PC-9 (cell line): ENCODE measurements at regions of chrX and their contacts with region 1.

Region 1: DNA sequence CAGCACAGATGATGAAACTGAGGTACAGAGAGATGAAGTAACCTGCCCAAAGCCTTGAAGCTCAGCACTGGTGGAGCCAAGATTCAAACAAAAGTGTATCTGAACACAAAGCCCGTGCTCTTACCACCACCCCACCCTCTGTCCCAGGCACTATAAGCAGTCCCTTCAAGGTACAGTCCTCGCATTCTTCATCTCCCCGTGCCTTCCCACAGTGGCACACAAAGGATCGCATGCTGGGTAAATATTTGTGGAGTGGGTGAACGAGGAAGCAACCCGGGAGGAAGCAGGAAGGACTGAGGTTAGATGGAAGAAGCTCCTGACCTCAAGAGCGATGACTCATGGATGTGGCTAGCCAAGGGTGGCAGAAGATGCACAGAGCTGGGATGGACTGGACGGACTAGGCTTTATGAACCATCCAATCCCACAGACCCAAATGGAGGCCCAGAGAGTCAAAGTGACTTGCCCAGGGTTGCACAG is 18.4 kb downstream of the IQSEC2 start:
- DNase-seq: peak; percentile 63 to 81
- H3K4me3 ChIP-seq: no peak overlapping the region
- H3K27ac ChIP-seq: peak overlapping the region; percentile 68
- H3K4me1 ChIP-seq: peaks cover 40% of the 10 kb centered on the region
- H3K27me3 ChIP-seq: no peaks in the 10 kb centered on the region
- CTCF ChIP-seq: no peak

Region 2: GRCh38 chrX:52981266-52981665 is 281.7 kb before region 1 on chrX:
- CTCF ChIA-PET with region 1: no interaction called
- POLR2A ChIA-PET with region 1: interaction called, 16 read pairs
- intact Hi-C with region 1: no loop called
- DNase-seq: no peak
- H3K4me3 ChIP-seq: no peak overlapping the region
- H3K27ac ChIP-seq: no peak overlapping the region
- H3K4me1 ChIP-seq: no peaks in the 10 kb centered on the region
- H3K27me3 ChIP-seq: no peaks in the 10 kb centered on the region
- CTCF ChIP-seq: no peak

Region 3: GRCh38 chrX:53071604-53072417 is 191.1 kb before region 1 on chrX:
- CTCF ChIA-PET with region 1: no interaction called
- POLR2A ChIA-PET with region 1: interaction called, 11 read pairs
- intact Hi-C with region 1: no loop called
- DNase-seq: peak in 1 of 2 experiments; percentile 64
- H3K4me3 ChIP-seq: peak overlapping the region; percentile 49; the same call in 1 of the 2 replicates
- H3K27ac ChIP-seq: no peak overlapping the region
- H3K4me1 ChIP-seq: no peaks in the 10 kb centered on the region
- H3K27me3 ChIP-seq: no peaks in the 10 kb centered on the region
- CTCF ChIP-seq: peak; percentile 60

Region 4: GRCh38 chrX:53211391-53211978 is 51.5 kb before region 1 on chrX:
- CTCF ChIA-PET with region 1: no interaction called
- POLR2A ChIA-PET with region 1: no interaction called
- intact Hi-C with region 1: no loop called
- DNase-seq: no peak
- H3K4me3 ChIP-seq: no peak overlapping the region
- H3K27ac ChIP-seq: no peak overlapping the region
- H3K4me1 ChIP-seq: no peaks in the 10 kb centered on the region
- H3K27me3 ChIP-seq: no peaks in the 10 kb centered on the region
- CTCF ChIP-seq: no peak

Region 5: DNA sequence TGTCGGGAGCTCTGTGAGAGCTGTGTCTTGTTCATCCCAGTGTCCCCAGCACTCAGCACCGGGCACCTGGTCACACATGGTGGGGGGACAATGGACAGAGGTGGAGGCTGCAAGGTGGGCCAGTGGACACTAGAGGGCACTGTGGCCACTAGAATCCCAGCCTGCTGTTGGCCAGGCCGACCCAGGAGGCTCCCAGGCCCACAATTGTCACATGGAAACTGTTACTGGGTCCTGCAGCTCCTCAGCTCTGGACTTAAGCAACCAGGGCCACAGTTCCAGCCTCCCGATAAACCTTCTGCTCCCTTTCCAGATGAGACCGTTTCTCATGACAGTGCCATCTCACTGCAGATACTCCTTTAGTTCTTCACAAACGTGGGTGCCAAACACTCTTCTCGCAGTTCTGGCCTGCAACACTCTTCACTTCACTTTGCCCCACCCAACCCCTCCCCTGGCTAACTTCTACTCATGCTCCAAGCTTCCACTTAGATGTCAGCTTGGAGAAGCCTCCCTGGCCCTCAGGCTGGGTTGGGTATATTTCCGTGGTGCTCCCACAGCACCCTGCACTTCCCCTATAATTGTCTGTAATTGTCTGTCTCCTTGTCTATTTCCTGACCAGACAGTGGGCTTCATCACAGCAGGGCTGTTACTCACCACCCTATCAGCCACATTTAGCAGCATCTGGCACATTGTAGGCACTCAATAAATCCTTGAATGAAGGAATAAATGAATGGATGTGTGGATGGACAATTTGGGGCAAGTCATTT is 21.9 kb after region 1 on chrX:
- CTCF ChIA-PET with region 1: interaction called, 3 read pairs
- POLR2A ChIA-PET with region 1: no interaction called
- intact Hi-C with region 1: loop called (anchors 1 kb)
- DNase-seq: peak in 1 of 2 experiments; percentile 62
- H3K4me3 ChIP-seq: no peak overlapping the region
- H3K27ac ChIP-seq: no peak overlapping the region
- H3K4me1 ChIP-seq: peaks cover 10% of the 10 kb centered on the region; the same call in 1 of the 2 replicates
- H3K27me3 ChIP-seq: no peaks in the 10 kb centered on the region
- CTCF ChIP-seq: peak; percentile 69

Region 6: GRCh38 chrX:53584891-53585290 is 321.9 kb after region 1 on chrX:
- CTCF ChIA-PET with region 1: no interaction called
- POLR2A ChIA-PET with region 1: no interaction called
- intact Hi-C with region 1: no loop called
- DNase-seq: no peak
- H3K4me3 ChIP-seq: no peak overlapping the region
- H3K27ac ChIP-seq: no peak overlapping the region
- H3K4me1 ChIP-seq: no peaks in the 10 kb centered on the region
- H3K27me3 ChIP-seq: no peaks in the 10 kb centered on the region
- CTCF ChIP-seq: no peak